CD4-positive, alpha-beta T cell (primary cell): ENCODE measurements at regions of chr11 and their contacts with region 1.

Region 1: DNA sequence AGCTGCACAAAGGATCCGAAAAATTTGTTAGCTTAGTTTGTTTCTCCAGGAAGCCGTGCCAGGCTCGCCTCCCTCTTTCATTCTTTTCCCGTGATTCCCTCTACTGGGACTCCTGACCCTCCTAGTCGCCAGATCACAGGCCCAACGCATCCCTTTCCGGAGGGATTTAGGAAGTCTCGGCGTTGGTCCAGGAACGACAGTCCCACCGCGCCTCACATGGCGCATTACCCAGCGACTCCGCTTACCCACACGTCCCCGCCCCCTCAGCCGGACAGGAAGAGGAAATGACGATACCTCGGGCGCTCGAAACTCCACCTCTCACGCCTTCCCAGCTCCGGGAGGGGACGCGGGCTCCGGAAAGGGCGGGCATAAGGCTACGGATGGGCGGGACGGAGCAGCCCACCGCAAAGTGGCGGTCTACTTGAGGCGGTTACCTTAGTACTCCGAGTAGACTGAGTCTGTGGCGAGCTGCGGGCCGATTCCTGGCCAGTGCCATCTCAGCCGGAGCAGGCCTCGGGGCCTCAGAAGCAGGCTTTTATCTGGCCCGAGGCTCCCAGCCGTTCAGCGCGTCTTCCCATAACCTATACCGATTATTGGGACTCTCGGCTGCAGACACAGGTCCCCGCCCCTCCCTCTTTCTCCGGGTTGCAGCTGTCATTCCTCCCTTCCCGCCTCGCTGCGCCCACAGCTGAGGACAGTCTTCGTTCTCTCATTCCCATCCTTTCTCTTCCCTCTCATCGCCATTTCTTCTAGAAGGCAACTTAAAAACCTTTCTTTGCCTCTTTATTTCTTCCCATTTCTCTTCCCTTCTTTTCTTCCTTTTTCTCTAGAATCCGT is at the start of gene CCDC15:
- DNase-seq: peak; percentile 89 to 98 (median 94)
- ATAC-seq: peak; percentile 95
- H3K4me3 ChIP-seq: peak within 1 kb of the TSS; percentile 87
- H3K4me3 Mint-ChIP-seq: no peak within 1 kb of the TSS
- H3K27ac ChIP-seq: peak within 1 kb of the TSS; percentile 74 to 90
- H3K27ac Mint-ChIP-seq: no peak within 1 kb of the TSS
- H3K4me1 ChIP-seq: peaks cover 40% of the 10 kb centered on the region
- H3K4me1 Mint-ChIP-seq: no peaks in the 10 kb centered on the region
- H3K27me3 ChIP-seq: no peaks in the 10 kb centered on the region
- H3K27me3 Mint-ChIP-seq: no peaks in the 10 kb centered on the region
- CTCF ChIP-seq: no peak
- total RNA-seq, gene CCDC15: 0.89 to 1.1 TPM

Region 2: DNA sequence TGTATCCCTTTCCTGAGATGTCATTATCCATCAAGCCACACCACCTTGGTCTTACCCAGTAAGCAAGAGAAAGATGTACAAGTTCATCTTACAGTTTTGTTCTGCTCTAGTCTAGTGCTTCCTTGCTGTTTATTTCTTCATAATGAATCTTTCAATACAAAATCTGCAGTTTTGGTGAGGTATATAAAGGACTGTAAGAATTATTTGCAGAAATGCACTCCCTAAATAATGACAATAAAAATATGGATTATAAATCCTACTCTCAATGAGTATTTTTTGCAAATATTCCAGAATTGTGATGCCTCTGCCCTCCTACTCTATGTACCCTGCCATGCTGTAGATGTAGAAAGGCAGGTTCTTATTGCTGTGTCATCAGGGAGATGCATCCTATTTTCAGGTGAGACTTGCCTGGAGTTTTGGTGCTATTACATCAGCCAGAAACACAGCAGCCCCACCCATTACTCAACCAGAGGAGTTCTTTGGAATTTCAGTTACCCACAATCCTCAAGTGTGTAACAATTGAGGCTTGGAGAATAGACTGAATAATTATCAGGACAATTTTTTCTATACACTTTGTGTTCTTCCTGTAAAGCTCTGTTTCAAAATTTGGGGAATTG is 976.1 kb before region 1 on chr11 and contains the start of gene OR10S1:
- CTCF ChIA-PET with region 1: no interaction called
- POLR2A ChIA-PET with region 1: no interaction called
- intact Hi-C with region 1: no loop called
- DNase-seq: no peak
- ATAC-seq: no peak
- H3K4me3 ChIP-seq: no peak within 1 kb of the TSS
- H3K4me3 Mint-ChIP-seq: no peak within 1 kb of the TSS
- H3K27ac ChIP-seq: no peak within 1 kb of the TSS
- H3K27ac Mint-ChIP-seq: no peak within 1 kb of the TSS
- H3K4me1 ChIP-seq: no peaks in the 10 kb centered on the region
- H3K4me1 Mint-ChIP-seq: no peaks in the 10 kb centered on the region
- H3K27me3 ChIP-seq: peaks cover 0 to 2% of the 10 kb centered on the region in 2 experiments
- H3K27me3 Mint-ChIP-seq: peaks cover 21% of the 10 kb centered on the region
- CTCF ChIP-seq: no peak
- total RNA-seq, gene OR10S1: not detected

Region 3: DNA sequence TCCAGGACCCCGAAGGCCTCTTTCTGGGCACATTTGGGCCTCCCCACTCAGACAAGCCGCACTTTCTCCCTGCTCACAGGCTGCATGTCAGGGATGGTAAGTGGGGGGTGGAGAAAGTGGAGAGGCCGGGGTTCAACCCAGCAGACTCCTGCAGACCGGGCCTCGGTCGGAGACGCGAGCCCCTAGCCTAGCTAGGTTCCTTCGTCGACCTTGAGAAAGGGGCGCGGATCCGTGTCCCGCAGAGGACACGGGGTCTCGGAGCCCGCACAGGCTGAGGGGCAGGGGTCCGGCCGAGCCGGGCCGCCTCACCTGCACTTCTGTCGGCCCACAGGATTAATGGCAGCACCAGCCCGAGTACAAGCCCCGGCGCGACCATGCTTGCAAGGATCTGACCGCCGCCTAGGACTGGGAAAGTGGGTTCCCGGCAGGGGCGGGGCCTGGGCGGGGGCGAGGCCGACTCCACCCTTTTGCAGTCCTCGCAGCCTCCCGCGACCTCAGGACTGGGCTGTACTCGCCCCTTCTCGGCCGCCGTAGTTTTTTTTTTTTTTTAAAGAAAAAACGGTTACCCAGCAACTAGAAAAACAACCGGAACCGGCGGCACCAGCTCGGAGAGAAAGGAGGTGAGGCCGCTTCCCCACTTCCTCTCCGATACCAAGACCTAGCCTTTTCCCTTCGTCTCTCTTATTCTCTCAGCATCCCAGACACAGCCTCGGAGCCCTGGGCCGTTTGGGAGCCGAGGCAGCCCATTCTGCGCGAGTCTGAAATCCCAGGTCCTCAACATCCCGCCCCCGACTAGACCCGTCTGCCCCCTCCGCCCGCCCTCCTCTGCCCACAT is 280.4 kb before region 1 on chr11 and contains the starts of genes SIAE and SPA17:
- CTCF ChIA-PET with region 1: no interaction called
- POLR2A ChIA-PET with region 1: interaction called, 4 read pairs
- intact Hi-C with region 1: loop called in 1 of 2 experiments (anchors 2 kb)
- DNase-seq: peak; percentile 70 to 95 (median 80)
- ATAC-seq: peak; percentile 66
- H3K4me3 ChIP-seq: peak within 1 kb of the TSS; percentile 85
- H3K4me3 Mint-ChIP-seq: peak within 1 kb of the TSS; percentile 91
- H3K27ac ChIP-seq: peak within 1 kb of the TSS; percentile 71 to 80
- H3K27ac Mint-ChIP-seq: no peak within 1 kb of the TSS
- H3K4me1 ChIP-seq: peaks cover 32% of the 10 kb centered on the region
- H3K4me1 Mint-ChIP-seq: peaks cover 42% of the 10 kb centered on the region
- H3K27me3 ChIP-seq: no peaks in the 10 kb centered on the region
- H3K27me3 Mint-ChIP-seq: no peaks in the 10 kb centered on the region
- CTCF ChIP-seq: no peak
- total RNA-seq, gene SIAE: 4.5 to 5.6 TPM
- total RNA-seq, gene SPA17: 0.16 TPM in 1 of 2 experiments, not detected in the other

Region 4: GRCh38 chr11:124920870-124921609 is 32.9 kb before region 1 on chr11:
- CTCF ChIA-PET with region 1: no interaction called
- POLR2A ChIA-PET with region 1: interaction called, 21 read pairs
- intact Hi-C with region 1: loop called in 1 of 2 experiments (anchors 2 kb)
- DNase-seq: peak; percentile 59 to 90 (median 78)
- ATAC-seq: peak; percentile 87
- H3K4me3 ChIP-seq: peak overlapping the region; percentile 43
- H3K4me3 Mint-ChIP-seq: peak overlapping the region; percentile 85
- H3K27ac ChIP-seq: no peak overlapping the region
- H3K27ac Mint-ChIP-seq: peak overlapping the region; percentile 52
- H3K4me1 ChIP-seq: peaks cover 27% of the 10 kb centered on the region
- H3K4me1 Mint-ChIP-seq: peaks cover 42% of the 10 kb centered on the region
- H3K27me3 ChIP-seq: no peaks in the 10 kb centered on the region
- H3K27me3 Mint-ChIP-seq: no peaks in the 10 kb centered on the region
- CTCF ChIP-seq: no peak

Region 5: DNA sequence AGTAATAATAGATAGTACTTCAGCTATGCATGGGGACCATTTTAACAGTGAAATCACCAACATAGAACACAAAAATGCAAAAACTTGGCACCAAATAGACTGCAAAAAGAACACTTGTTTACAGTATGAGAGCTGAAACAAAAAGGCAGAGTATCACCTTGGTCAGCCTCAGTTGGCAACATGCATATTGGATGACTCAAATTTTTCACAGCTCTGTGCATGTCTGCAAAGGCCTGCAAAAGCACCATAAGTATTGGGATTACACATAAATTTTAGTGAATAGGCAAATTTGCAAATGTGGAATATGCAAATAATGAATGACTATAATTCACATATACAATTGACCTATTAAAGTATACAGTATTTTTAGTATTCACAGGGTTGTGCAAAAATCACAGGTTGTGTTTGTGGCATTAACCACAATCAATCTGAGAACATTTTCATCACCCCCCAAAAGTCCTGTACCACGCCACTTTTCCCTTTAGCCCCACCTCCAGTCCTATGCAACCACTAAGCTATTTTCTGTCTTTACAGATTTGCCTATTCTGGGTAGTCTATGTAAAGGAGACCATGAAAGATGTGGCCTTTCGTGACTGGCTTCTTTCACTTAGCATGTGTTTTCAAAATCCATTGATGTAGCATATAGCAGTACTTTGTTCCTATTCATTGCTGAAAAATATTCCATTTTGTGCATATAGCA is 47.3 kb after region 1 on chr11:
- CTCF ChIA-PET with region 1: no interaction called
- POLR2A ChIA-PET with region 1: no interaction called
- intact Hi-C with region 1: no loop called
- DNase-seq: no peak
- ATAC-seq: no peak
- H3K4me3 ChIP-seq: no peak overlapping the region
- H3K4me3 Mint-ChIP-seq: no peak overlapping the region
- H3K27ac ChIP-seq: no peak overlapping the region
- H3K27ac Mint-ChIP-seq: no peak overlapping the region
- H3K4me1 ChIP-seq: no peaks in the 10 kb centered on the region
- H3K4me1 Mint-ChIP-seq: no peaks in the 10 kb centered on the region
- H3K27me3 ChIP-seq: no peaks in the 10 kb centered on the region
- H3K27me3 Mint-ChIP-seq: no peaks in the 10 kb centered on the region
- CTCF ChIP-seq: no peak

Region 6: GRCh38 chr11:125123947-125124617 is 170.1 kb after region 1 on chr11:
- CTCF ChIA-PET with region 1: no interaction called
- POLR2A ChIA-PET with region 1: no interaction called
- intact Hi-C with region 1: no loop called
- DNase-seq: peak in 8 of 14 experiments; percentile 22 to 63 (median 36)
- ATAC-seq: peak; percentile 51
- H3K4me3 ChIP-seq: no peak overlapping the region
- H3K4me3 Mint-ChIP-seq: no peak overlapping the region
- H3K27ac ChIP-seq: no peak overlapping the region
- H3K27ac Mint-ChIP-seq: no peak overlapping the region
- H3K4me1 ChIP-seq: no peaks in the 10 kb centered on the region
- H3K4me1 Mint-ChIP-seq: no peaks in the 10 kb centered on the region
- H3K27me3 ChIP-seq: peaks cover 8 to 10% of the 10 kb centered on the region in 2 experiments
- H3K27me3 Mint-ChIP-seq: peaks cover 58% of the 10 kb centered on the region
- CTCF ChIP-seq: peak; percentile 61

Region 7: DNA sequence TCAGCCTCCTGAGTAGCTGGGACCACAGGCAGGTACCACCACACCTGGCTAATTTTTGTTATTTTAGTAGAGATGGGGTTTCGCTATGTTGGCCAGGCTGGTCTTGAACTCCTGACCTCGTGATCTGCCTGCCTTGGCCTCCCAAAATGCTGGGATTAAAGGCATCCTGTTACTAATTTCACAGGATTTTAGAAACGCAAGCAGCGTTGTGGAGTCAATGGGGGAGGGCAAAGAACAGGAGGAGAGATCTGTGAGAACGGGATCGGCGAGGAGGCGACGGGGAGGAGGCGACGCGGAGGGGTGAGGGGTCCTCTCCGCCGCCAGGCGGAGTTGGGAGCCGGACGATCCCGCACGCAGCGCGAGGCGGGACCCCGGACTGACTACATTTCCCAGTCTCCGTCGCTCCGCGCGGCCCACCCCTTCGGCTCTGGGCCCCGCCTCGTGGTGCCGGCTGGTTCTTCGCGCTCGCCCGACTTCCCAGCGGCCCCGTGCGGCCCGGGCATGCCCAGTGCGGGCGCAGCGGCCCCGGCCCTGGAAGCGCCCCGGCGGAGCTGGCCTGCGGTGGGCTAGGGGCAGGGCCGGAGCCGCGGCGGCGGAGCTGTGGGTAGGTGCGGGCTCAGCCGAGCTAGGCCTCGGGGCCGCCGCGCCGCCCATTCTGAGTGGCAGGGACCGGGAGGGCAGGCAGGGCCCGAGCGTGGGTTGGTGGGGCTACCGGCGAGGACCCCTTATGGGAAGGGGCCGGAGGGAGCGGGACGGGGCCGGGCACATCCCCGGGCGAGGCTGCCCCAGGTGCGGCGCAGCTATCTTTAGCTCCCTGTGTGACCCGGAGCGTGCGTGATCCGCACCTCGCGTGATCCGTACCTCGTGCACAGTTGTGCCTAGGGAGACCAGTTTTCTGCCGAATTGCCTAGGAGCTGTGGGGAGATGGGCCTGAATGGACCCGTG is 615.3 kb after region 1 on chr11 and contains the start of gene EI24:
- CTCF ChIA-PET with region 1: no interaction called
- POLR2A ChIA-PET with region 1: no interaction called
- intact Hi-C with region 1: loop called in 1 of 2 experiments (anchors 10 kb)
- DNase-seq: peak; percentile 76 to 95 (median 86)
- ATAC-seq: peak; percentile 94
- H3K4me3 ChIP-seq: peak within 1 kb of the TSS; percentile 80
- H3K4me3 Mint-ChIP-seq: peak within 1 kb of the TSS; percentile 95
- H3K27ac ChIP-seq: peak within 1 kb of the TSS; percentile 68 to 74
- H3K27ac Mint-ChIP-seq: peak within 1 kb of the TSS; percentile 84
- H3K4me1 ChIP-seq: peaks cover 18% of the 10 kb centered on the region
- H3K4me1 Mint-ChIP-seq: peaks cover 26% of the 10 kb centered on the region
- H3K27me3 ChIP-seq: no peaks in the 10 kb centered on the region
- H3K27me3 Mint-ChIP-seq: no peaks in the 10 kb centered on the region
- CTCF ChIP-seq: peak; percentile 76
- total RNA-seq, gene EI24: 21.0 to 22.8 TPM

Region 8: GRCh38 chr11:126080161-126080941 is 1126.4 kb after region 1 on chr11:
- CTCF ChIA-PET with region 1: no interaction called
- POLR2A ChIA-PET with region 1: no interaction called
- intact Hi-C with region 1: loop called in 1 of 2 experiments (anchors 5 kb)
- DNase-seq: no peak
- ATAC-seq: no peak
- H3K4me3 ChIP-seq: no peak overlapping the region
- H3K4me3 Mint-ChIP-seq: no peak overlapping the region
- H3K27ac ChIP-seq: no peak overlapping the region
- H3K27ac Mint-ChIP-seq: no peak overlapping the region
- H3K4me1 ChIP-seq: peaks cover 26% of the 10 kb centered on the region
- H3K4me1 Mint-ChIP-seq: peaks cover 25% of the 10 kb centered on the region
- H3K27me3 ChIP-seq: no peaks in the 10 kb centered on the region
- H3K27me3 Mint-ChIP-seq: no peaks in the 10 kb centered on the region
- CTCF ChIP-seq: no peak